Activated CD8-positive, alpha-beta T cell treated with anti-CD3 and anti-CD28 coated beads for 36 hours (primary cell): ENCODE measurements at regions of chr3 and their contacts with region 1.

Region 1: DNA sequence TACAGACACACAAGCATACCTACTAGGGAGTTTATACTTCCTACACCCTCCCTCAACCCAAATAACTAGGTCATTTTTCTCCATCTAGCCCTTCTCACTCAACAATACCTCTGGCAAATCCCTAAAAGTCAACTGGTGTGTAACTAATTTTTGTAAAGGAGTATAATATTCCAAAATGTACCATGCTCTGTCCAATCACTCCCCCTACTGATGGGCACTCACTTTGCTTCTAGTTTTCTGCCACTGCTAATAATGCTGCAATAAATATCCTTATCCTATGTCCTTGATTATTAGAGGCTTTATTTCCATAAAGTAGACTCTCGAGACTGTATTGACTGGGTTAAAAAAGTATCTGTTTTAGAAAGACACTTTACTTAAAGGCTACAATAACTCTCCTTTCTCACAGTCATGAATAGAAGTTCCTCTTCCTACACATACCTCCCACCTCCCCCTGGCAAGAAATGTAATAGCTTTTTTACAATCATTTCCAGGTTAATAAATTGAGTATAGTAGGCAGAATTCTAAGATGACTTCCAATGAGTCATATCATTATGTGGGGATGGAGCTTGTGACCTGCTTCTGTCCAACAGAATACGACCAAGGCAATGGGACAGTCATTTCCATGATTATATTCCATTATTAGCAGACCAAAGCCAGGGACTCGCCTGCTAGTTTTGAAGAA is 30.0 kb downstream of the SHQ1 start:
- DNase-seq: no peak
- ATAC-seq: no peak
- H3K4me3 Mint-ChIP-seq: no peak overlapping the region
- H3K27ac Mint-ChIP-seq: no peak overlapping the region
- H3K4me1 Mint-ChIP-seq: peaks cover 23% of the 10 kb centered on the region
- H3K27me3 Mint-ChIP-seq: no peaks in the 10 kb centered on the region
- CTCF ChIP-seq: peak; percentile 32

Region 2: GRCh38 chr3:71875461-71875947 is 942.7 kb before region 1 on chr3:
- CTCF ChIA-PET with region 1: interaction called, 34 read pairs
- POLR2A ChIA-PET with region 1: no interaction called
- intact Hi-C with region 1: no loop called
- DNase-seq: peak; percentile 89
- ATAC-seq: peak; percentile 97
- H3K4me3 Mint-ChIP-seq: no peak overlapping the region
- H3K27ac Mint-ChIP-seq: peak overlapping the region; percentile 73
- H3K4me1 Mint-ChIP-seq: peaks cover 28% of the 10 kb centered on the region
- H3K27me3 Mint-ChIP-seq: peaks cover 4% of the 10 kb centered on the region
- CTCF ChIP-seq: peak; percentile 83

Region 3: GRCh38 chr3:72665701-72666443 is 152.4 kb before region 1 on chr3:
- CTCF ChIA-PET with region 1: interaction called, 97 read pairs
- POLR2A ChIA-PET with region 1: no interaction called
- intact Hi-C with region 1: loop called (anchors 5 kb)
- DNase-seq: peak; percentile 77
- ATAC-seq: peak; percentile 68
- H3K4me3 Mint-ChIP-seq: no peak overlapping the region
- H3K27ac Mint-ChIP-seq: no peak overlapping the region
- H3K4me1 Mint-ChIP-seq: no peaks in the 10 kb centered on the region
- H3K27me3 Mint-ChIP-seq: no peaks in the 10 kb centered on the region
- CTCF ChIP-seq: peak; percentile 67

Region 4: GRCh38 chr3:72769758-72770540 is 48.3 kb before region 1 on chr3:
- CTCF ChIA-PET with region 1: no interaction called
- POLR2A ChIA-PET with region 1: no interaction called
- intact Hi-C with region 1: no loop called
- DNase-seq: no peak
- ATAC-seq: no peak
- H3K4me3 Mint-ChIP-seq: no peak overlapping the region
- H3K27ac Mint-ChIP-seq: no peak overlapping the region
- H3K4me1 Mint-ChIP-seq: peaks cover 2% of the 10 kb centered on the region
- H3K27me3 Mint-ChIP-seq: no peaks in the 10 kb centered on the region
- CTCF ChIP-seq: no peak

Region 5: GRCh38 chr3:72830452-72831217 is 12.4 kb after region 1 on chr3:
- CTCF ChIA-PET with region 1: interaction called, 17 read pairs
- POLR2A ChIA-PET with region 1: no interaction called
- intact Hi-C with region 1: no loop called
- DNase-seq: no peak
- ATAC-seq: no peak
- H3K4me3 Mint-ChIP-seq: no peak overlapping the region
- H3K27ac Mint-ChIP-seq: no peak overlapping the region
- H3K4me1 Mint-ChIP-seq: peaks cover 6% of the 10 kb centered on the region
- H3K27me3 Mint-ChIP-seq: no peaks in the 10 kb centered on the region
- CTCF ChIP-seq: no peak